Breast epithelium (tissue), 4 donors: ENCODE measurements at regions of chr7 and their contacts with region 1.

Region 1: DNA sequence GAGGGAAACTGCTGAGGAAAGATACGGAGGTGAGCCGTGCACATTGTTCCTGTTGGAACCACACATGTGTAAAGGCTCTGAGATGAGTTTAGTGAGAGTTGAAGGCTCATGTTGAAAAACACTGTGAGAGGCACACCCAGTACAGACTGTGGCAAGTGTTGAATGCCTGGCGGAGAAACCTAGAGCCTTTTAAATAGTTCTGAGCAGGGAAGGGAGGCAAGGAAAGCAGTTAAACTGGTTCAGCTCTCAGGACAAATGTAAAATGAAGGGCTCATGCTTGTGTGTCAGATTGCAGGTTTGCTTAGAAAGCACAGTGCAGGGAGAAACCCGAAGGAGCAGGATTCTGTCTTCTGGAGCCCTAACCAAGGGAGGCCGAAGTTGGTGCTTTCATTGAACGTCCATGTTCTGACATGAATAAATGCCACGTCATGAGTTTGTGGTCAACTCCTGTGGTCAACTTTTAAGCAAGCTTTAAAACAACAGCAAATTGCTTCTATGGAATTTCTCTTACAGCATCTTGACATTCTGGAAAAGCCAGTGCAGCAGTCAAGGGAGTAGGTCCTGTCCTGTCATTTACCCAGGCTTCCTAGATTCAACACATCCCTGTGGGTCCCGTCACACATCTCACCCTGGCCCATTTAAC is 650.9 kb upstream of the GALNT17 start:
- DNase-seq: peak in 1 of 2 donors; percentile 21
- H3K4me3 ChIP-seq: no peak overlapping the region
- H3K27ac ChIP-seq: no peak overlapping the region
- H3K4me1 ChIP-seq: no peaks in the 10 kb centered on the region
- H3K27me3 ChIP-seq: no peaks in the 10 kb centered on the region
- CTCF ChIP-seq: no peak
- POLR2A ChIP-seq: no peak

Region 2: GRCh38 chr7:69545175-69545574 is 935.9 kb before region 1 on chr7:
- intact Hi-C with region 1: loop called (anchors 5 kb)
- DNase-seq: no peak
- H3K4me3 ChIP-seq: no peak overlapping the region
- H3K27ac ChIP-seq: no peak overlapping the region
- H3K4me1 ChIP-seq: no peaks in the 10 kb centered on the region
- H3K27me3 ChIP-seq: no peaks in the 10 kb centered on the region
- CTCF ChIP-seq: no peak
- POLR2A ChIP-seq: no peak

Region 3: DNA sequence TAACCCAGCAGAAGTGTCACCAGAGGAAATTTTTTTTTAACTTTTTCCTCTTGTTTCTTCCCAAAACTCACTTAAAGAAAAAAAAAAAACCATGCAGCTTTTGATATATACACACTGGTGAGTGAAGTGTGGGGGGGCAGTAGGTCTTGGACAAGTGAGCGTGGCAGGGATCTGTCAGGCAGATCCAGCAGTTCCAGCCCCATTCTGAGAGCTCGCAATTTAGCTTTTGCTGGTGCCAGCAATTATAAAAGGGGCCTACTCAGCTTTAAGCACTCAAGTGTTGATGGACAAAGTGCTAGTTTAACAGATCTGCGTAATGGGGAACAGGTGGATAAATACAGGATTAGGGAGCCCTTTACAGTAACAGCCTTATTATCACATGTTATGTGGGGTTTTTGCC is 31.7 kb after region 1 on chr7:
- intact Hi-C with region 1: no loop called
- DNase-seq: no peak
- H3K4me3 ChIP-seq: no peak overlapping the region
- H3K27ac ChIP-seq: no peak overlapping the region
- H3K4me1 ChIP-seq: no peaks in the 10 kb centered on the region
- H3K27me3 ChIP-seq: no peaks in the 10 kb centered on the region
- CTCF ChIP-seq: no peak
- POLR2A ChIP-seq: no peak